ENCODE measurements at regions of chr21 and their contacts with region 1.

Region 1: GRCh38 chr21:14877570-14878228 is 187.1 kb downstream of the NRIP1 start:
- DNase-seq: no peak
- H3K4me3 ChIP-seq: no peak overlapping the region
- H3K27ac ChIP-seq: peak overlapping the region in 2 of 4 donors; percentile 5 to 12
- H3K4me1 ChIP-seq: peaks cover 0 to 29% (median 23%) of the 10 kb centered on the region in 4 donors
- H3K27me3 ChIP-seq: no peaks in the 10 kb centered on the region
- CTCF ChIP-seq: no peak
- EP300 ChIP-seq: no peak
- POLR2A ChIP-seq: no peak

Region 2: DNA sequence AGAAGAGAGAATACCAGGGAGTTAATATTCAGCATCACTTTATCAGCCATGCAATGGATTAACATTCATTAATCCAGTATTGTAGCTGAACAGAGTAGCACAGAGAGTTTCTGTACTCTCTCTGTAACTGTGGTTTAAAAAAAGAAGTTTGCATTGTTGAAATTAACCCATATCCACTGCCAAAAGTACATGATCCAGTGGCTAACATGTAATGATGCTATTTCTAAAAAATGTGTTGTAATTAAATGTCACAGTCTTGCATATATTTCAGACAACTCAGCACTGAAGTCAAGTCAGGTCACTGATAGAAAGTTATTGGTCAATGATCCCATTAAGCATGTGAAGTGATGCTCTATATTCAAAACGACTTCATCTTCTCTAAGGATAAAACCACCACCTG is 45.8 kb after region 1 on chr21:
- intact Hi-C with region 1: loop called (anchors 10 kb)
- DNase-seq: no peak
- H3K4me3 ChIP-seq: no peak overlapping the region
- H3K27ac ChIP-seq: no peak overlapping the region
- H3K4me1 ChIP-seq: no peaks in the 10 kb centered on the region
- H3K27me3 ChIP-seq: no peaks in the 10 kb centered on the region
- CTCF ChIP-seq: no peak
- EP300 ChIP-seq: no peak
- POLR2A ChIP-seq: no peak

Region 3: DNA sequence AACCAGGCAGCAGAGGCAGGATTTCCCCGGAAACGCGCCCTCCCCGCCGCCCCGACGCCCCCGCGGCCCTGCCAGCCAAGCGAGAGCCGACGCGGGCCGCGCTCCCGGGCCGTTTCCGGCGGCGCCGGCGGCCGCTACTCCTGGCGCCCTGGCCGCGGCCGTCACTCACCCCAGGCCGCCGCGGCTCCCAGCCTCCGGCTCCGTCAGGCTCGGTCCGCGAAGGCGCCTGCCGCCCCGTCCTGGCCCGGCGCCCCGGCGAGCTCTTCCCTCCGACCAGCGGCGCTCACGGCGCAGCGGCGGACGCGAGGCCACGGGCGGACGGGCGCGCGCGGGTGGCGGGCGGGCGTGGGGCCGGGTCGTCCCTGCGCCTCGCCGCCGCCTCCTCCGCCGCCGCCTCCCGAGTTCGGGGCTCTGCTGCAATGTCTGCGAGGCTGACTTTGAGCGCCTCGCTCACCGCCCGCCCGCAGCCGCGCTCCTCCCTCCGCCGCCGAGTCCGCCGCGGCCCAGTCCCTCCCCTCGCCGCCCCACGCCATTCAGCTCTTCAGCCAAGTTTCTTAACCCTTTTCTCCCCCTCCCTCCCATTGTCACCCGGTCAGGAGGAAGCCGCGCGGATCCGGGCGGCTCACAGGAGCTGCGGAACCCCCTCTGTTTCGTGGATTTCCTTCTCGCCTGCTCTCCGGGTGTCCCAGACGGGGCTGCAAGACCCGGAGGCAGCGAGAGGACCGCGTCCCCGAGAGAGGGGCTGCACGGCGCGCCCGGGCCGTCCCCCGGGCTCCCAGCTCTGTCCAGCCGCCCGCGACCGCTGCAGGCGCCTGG is 187.1 kb after region 1 on chr21 and contains the start of gene NRIP1:
- intact Hi-C with region 1: no loop called
- DNase-seq: peak; percentile 95
- H3K4me3 ChIP-seq: peak within 1 kb of the TSS; percentile 74 to 97 (median 96)
- H3K27ac ChIP-seq: peak within 1 kb of the TSS; percentile 96 to 99 (median 98)
- H3K4me1 ChIP-seq: peaks cover 0 to 44% (median 27%) of the 10 kb centered on the region in 4 donors
- H3K27me3 ChIP-seq: no peaks in the 10 kb centered on the region
- CTCF ChIP-seq: no peak
- EP300 ChIP-seq: no peak
- POLR2A ChIP-seq: peak; percentile 53 to 66
- total RNA-seq, gene NRIP1: 26.3 to 35.3 (median 28.8) TPM

Measured in sigmoid colon (tissue), 7 donors.